ENCODE measurements at regions of chr18 and their contacts with region 1.

Region 1: DNA sequence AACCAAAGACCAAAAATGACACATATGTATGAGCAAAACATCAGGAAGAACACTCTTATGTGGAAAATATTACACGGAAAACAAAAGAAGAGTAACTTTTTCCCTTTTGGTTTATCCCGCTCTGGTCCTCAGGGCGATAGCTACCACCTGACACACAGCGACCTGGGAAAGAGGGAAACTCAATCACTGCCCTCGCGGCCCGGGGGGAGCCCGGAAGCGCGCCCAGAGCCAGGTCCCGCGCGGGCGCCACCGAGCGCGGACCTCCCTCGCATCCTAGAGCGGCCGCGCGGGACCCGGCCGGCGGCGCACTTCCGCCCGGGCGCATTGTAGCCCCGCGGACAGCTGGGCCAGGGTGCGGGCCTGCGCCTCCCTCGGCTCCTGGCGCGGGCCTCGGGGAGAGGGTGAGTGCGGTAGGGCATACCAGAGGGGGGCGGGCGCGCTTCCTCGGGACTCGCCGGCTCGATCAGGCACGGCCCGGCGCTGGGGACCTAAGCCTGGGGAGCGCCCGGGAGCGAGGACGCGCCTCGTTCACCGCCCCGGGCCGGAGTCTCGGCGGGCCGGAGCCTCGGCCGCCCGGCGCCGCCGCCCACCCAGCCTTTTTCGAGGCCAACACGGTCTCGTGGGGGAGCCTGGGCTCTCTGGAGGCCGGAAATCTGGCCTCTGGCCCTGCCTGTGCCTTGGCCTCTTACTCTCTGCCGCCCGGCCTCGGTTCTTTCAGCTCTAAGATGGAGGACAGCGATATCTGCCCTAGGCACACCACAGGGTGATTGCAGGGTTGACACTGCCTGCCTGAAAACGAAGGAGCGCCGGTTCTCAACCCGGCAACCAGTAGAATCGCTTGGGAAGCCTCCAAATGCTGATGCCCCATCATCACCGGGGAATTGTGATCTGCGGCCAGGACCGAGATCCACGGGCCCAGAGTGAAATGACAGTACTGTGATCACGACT is at the start of gene ELAC1:
- DNase-seq: peak; percentile 76 to 89 (median 79)
- ATAC-seq: peak; percentile 85 to 99 (median 98)
- H3K4me3 ChIP-seq: peak within 1 kb of the TSS; percentile 80 to 98 (median 90)
- H3K27ac ChIP-seq: peak within 1 kb of the TSS; percentile 95 to 100 (median 98)
- H3K4me1 ChIP-seq: peaks cover 0 to 26% (median 16%) of the 10 kb centered on the region in 12 donors
- H3K27me3 ChIP-seq: no peaks in the 10 kb centered on the region
- CTCF ChIP-seq: peak in 4 of 12 donors; percentile 12 to 30 (median 18)
- POLR2A ChIP-seq: peak in 1 of 2 donors; percentile 89
- total RNA-seq, gene ELAC1: 3.0 to 7.2 (median 4.0) TPM

Region 2: DNA sequence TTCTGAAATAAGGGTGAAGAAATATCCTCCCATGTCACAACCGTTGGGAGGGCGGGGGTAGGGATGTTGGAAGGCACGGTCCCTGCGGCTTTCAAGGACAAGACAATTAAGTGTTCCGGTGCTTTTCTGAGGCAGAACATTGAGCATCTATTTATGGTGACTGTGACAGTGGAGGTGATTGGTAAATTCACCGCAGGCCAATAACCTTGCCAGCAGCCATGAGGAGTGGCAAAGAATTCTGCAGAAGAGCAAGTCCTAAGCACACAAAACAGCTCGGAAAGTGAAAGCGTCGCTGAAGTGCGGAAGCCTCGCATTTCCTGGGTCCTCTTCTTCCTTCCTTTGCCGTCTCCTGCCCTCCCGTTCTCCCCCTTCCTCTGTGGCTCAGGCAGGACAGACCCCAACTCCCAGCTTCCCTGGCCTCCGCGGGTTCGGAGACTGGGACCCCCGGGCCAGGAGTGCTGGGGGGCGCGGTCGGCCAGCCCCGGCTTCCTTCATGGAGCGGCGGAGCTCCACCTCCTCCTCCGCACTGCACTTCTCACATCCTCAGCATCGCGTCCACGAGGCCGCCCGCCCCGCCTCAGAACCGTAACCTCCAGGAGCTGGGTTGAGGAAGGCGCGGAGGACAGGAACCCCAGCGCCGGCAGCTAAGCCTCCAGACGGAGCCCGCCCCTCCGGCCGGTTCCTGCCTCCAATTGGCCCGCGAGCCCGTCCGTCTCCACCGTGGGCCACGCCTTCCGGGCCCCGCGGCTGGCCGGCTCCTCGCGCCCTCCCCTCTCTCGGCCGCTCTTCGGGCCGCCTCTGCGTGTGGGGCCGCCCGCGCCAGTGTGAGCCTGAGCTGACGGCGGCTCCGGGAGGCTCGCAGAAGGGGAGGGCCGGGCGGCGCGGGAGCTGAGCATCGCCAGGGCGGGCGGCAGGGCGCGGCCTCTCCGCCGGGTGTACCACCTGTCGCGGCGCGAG is 89.4 kb before region 1 on chr18 and contains the start of gene ME2:
- intact Hi-C with region 1: loop called in 6 of 10 experiments (anchors 2 to 10 kb)
- DNase-seq: peak; percentile 93 to 97 (median 94)
- ATAC-seq: peak; percentile 99
- H3K4me3 ChIP-seq: peak within 1 kb of the TSS; percentile 51 to 98 (median 79)
- H3K27ac ChIP-seq: peak within 1 kb of the TSS; percentile 85 to 98 (median 94)
- H3K4me1 ChIP-seq: peaks cover 0 to 40% (median 12%) of the 10 kb centered on the region in 12 donors
- H3K27me3 ChIP-seq: no peaks in the 10 kb centered on the region
- CTCF ChIP-seq: no peak
- POLR2A ChIP-seq: peak; percentile 88 to 97
- total RNA-seq, gene ME2: 53.0 to 91.3 (median 84.0) TPM

Region 3: DNA sequence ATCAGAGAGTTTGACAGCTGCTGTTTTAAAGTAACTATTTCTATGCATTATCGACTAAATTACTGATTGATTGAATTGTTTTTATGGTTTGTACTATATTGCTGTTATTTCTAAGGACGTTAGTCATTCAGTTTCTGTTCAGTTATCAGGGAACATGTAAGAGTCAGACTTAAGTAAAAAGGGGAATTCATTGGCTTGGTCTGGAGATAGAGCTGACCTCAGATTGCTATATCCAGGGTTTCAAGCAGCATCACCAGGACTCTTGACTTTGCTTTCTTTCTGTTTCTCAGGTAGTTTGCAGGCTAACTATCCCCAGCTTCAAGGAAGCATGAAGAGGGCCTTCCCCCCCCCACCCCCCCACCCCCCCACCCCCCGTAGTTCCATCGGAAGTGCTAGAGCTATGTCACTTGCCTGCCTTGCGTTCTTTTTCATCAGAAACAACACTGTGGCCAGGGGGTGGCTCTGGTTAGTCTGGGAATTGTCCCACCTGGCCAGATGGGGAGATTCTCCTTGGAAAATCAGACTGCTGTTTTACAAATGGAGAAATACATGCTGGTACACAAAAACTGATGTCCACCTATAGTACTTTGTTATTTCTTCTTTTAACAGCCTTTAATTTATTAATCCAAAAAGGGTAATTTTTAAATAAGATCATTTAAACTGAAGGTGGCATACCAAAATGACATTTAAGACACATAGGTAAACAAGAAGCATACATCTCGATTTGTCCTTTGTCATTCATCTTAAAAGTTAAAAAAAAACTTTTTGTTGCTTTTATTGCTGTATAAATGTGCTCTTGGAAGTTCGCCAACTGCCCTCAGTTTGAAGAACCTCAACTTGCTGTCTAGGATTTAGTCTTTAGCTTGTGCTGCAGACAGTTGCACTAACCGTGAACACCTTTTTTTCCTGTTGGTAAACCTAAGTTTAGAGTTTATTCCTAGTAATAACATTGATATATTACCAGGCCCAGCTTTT is 71.4 kb after region 1 on chr18:
- intact Hi-C with region 1: loop called in 1 of 10 experiments (anchors 5 kb)
- DNase-seq: no peak
- ATAC-seq: no peak
- H3K4me3 ChIP-seq: no peak overlapping the region
- H3K27ac ChIP-seq: no peak overlapping the region
- H3K4me1 ChIP-seq: peaks cover 17 to 99% (median 85%) of the 10 kb centered on the region in 12 donors
- H3K27me3 ChIP-seq: no peaks in the 10 kb centered on the region
- CTCF ChIP-seq: no peak
- POLR2A ChIP-seq: no peak

Region 4: GRCh38 chr18:51051105-51051712 is 83.2 kb after region 1 on chr18:
- intact Hi-C with region 1: loop called in 5 of 10 experiments (anchors 5 to 10 kb)
- DNase-seq: no peak
- ATAC-seq: peak; percentile 68 to 84 (median 76)
- H3K4me3 ChIP-seq: no peak overlapping the region
- H3K27ac ChIP-seq: no peak overlapping the region
- H3K4me1 ChIP-seq: peaks cover 0 to 22% (median 7%) of the 10 kb centered on the region in 12 donors
- H3K27me3 ChIP-seq: no peaks in the 10 kb centered on the region
- CTCF ChIP-seq: peak; percentile 67 to 85 (median 76)
- POLR2A ChIP-seq: no peak